ENCODE measurements at regions of chr9 and their contacts with region 1.

Region 1: GRCh38 chr9:114906908-114907571 is 23.4 kb downstream of the TNFSF8 start:
- DNase-seq: no peak
- H3K4me3 ChIP-seq: no peak overlapping the region
- CTCF ChIP-seq: no peak
- POLR2A ChIP-seq: no peak

Region 2: DNA sequence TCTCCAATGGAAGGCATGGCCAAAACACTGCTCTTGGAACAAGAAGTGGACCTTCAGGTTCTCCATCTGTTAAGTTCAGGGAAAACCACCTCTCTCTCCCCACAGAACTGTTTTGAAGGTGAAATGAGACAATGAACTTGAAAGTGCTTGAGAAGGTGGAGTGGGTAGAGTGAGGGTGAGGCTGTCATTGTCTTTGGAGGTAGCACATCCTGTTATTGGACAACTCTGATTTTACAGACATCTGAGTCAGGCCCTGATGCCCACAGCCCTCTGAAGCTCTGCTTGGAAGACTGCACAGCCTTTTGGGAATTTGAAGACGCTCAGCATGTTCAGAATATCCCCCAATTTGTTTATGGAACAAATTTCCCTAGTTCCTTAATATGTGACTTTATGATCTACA is 197.4 kb before region 1 on chr9:
- intact Hi-C with region 1: no loop called
- DNase-seq: no peak
- H3K4me3 ChIP-seq: no peak overlapping the region
- CTCF ChIP-seq: no peak
- POLR2A ChIP-seq: no peak

Region 3: DNA sequence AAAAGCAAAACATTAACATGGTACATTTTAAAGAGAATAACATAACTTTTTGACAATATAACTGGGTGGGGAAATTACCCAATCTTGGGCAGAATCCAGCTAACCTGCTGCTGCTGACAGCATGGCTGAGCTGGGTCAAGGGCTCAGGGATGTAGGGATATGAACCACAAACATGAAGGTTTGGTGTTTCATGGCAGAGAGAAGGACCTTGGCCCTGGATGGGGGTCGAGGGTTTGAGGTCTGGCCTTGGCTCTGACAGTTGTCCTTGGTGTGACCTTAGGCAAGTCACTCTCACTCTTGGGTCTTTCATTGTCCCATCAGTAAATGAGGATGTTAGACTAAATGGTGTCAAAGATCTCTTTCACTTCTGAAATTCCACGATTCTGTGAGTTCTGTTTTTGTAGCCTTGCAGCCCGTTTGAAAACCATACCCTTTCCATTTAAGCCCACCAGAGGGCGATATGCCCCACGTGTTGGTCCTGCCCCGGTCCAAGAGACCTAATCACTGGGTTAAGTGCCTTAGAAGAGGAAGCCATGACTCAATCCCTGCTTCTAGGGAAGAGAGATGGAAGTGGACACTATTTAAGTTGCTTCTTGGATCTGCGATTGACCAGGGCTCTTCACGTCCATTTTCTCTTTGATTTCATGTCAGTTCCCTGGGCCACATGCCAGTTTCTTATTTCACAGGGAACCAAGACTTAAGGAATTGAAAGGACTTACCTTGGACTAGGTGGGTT is 168.3 kb before region 1 on chr9:
- intact Hi-C with region 1: loop called (anchors 5 kb)
- DNase-seq: peak; percentile 76 to 94
- H3K4me3 ChIP-seq: no peak overlapping the region
- CTCF ChIP-seq: peak in 1 of 3 donors; percentile 85
- POLR2A ChIP-seq: no peak

Measured in lower leg skin (tissue), 4 donors.